B cell (primary cell): ENCODE measurements at regions of chr1 and their contacts with region 1.

Region 1: DNA sequence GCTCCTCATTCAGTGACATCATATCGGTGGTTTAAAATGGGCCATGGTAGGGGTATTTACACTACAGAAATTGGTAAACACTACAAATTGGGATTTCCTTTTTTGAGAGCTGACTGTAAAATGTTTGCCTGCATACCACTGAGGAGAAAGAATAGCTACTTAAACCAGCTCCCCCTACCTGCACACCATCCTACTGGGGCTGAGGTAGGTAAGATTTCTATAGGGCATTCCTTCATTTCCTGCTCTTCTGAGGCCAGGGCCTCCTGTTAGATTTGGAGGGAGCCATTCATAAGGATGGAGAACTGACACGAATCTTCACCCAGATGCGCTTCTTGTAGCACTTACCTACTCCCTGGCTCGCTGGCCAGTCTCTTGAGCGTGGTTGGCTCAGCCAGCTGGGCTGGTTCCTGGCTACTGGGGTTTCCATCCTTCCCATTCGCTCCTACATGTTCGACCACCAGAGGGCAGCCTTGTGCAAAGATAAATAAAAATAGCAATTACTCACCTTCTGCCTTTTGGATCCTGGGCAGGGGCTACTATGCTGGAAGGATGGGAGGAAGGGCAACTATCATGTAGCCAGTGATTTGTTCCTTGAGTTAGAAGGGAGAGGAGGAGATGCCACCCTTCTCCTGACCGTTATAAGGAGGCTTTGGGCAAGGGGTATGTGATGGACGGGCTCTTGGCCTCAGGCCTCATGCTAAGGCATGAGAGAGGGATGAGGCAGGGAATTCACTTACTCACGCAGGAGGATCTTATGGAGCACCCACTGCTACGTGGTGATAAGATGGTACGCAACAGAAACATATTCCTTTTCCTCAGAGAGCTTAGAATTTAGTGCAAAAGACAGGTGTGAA is 10.7 kb downstream of the OPTC start:
- DNase-seq: peak; percentile 80
- ATAC-seq: peak; percentile 72
- H3K4me3 ChIP-seq: no peak overlapping the region
- H3K4me3 Mint-ChIP-seq: no peak overlapping the region
- H3K27ac ChIP-seq: no peak overlapping the region
- H3K27ac Mint-ChIP-seq: no peak overlapping the region
- H3K4me1 ChIP-seq: no peaks in the 10 kb centered on the region
- H3K4me1 Mint-ChIP-seq: peaks cover 2% of the 10 kb centered on the region
- H3K27me3 ChIP-seq: peaks cover 0 to 7% (median 0%) of the 10 kb centered on the region in 4 experiments
- H3K27me3 Mint-ChIP-seq: peaks cover 16% of the 10 kb centered on the region
- CTCF ChIP-seq: peak; percentile 93

Region 2: DNA sequence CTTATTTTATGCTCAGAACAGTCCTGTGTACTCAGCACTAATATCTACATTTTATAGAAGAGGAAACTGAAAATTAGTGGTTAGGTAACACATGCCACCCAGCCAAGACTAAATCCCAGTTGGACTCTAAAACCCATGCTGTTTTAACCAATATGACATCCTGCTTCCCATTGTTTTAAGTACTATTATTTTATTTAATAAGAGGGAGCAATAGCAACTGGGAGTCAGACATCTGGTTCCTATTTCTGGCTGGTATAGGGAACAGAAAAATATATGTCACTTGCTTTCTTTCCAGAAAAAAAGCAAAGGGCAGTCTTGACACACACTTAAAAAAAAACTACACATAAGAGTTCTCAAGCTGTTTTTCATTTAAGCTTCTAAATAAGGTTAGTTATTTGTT is 589.5 kb before region 1 on chr1:
- CTCF ChIA-PET with region 1: no interaction called
- POLR2A ChIA-PET with region 1: no interaction called
- intact Hi-C with region 1: no loop called
- DNase-seq: no peak
- ATAC-seq: no peak
- H3K4me3 ChIP-seq: no peak overlapping the region
- H3K4me3 Mint-ChIP-seq: no peak overlapping the region
- H3K27ac ChIP-seq: no peak overlapping the region
- H3K27ac Mint-ChIP-seq: no peak overlapping the region
- H3K4me1 ChIP-seq: no peaks in the 10 kb centered on the region
- H3K4me1 Mint-ChIP-seq: no peaks in the 10 kb centered on the region
- H3K27me3 ChIP-seq: no peaks in the 10 kb centered on the region
- H3K27me3 Mint-ChIP-seq: no peaks in the 10 kb centered on the region
- CTCF ChIP-seq: no peak

Region 3: GRCh38 chr1:203448521-203449061 is 56.0 kb before region 1 on chr1:
- CTCF ChIA-PET with region 1: no interaction called
- POLR2A ChIA-PET with region 1: no interaction called
- intact Hi-C with region 1: no loop called
- DNase-seq: no peak
- ATAC-seq: no peak
- H3K4me3 ChIP-seq: no peak overlapping the region
- H3K4me3 Mint-ChIP-seq: no peak overlapping the region
- H3K27ac ChIP-seq: no peak overlapping the region
- H3K27ac Mint-ChIP-seq: no peak overlapping the region
- H3K4me1 ChIP-seq: peaks cover 2 to 6% of the 10 kb centered on the region in 2 donors
- H3K4me1 Mint-ChIP-seq: peaks cover 8% of the 10 kb centered on the region
- H3K27me3 ChIP-seq: peaks cover 0 to 8% (median 0%) of the 10 kb centered on the region in 4 experiments
- H3K27me3 Mint-ChIP-seq: peaks cover 8% of the 10 kb centered on the region
- CTCF ChIP-seq: no peak

Region 4: GRCh38 chr1:203492748-203493130 is 11.9 kb before region 1 on chr1:
- CTCF ChIA-PET with region 1: interaction called, 20 read pairs
- POLR2A ChIA-PET with region 1: no interaction called
- intact Hi-C with region 1: no loop called
- DNase-seq: no peak
- ATAC-seq: no peak
- H3K4me3 ChIP-seq: no peak overlapping the region
- H3K4me3 Mint-ChIP-seq: no peak overlapping the region
- H3K27ac ChIP-seq: no peak overlapping the region
- H3K27ac Mint-ChIP-seq: no peak overlapping the region
- H3K4me1 ChIP-seq: peaks cover 0 to 5% of the 10 kb centered on the region in 2 donors
- H3K4me1 Mint-ChIP-seq: peaks cover 7% of the 10 kb centered on the region
- H3K27me3 ChIP-seq: peaks cover 0 to 9% (median 0%) of the 10 kb centered on the region in 4 experiments
- H3K27me3 Mint-ChIP-seq: peaks cover 21% of the 10 kb centered on the region
- CTCF ChIP-seq: no peak

Region 5: DNA sequence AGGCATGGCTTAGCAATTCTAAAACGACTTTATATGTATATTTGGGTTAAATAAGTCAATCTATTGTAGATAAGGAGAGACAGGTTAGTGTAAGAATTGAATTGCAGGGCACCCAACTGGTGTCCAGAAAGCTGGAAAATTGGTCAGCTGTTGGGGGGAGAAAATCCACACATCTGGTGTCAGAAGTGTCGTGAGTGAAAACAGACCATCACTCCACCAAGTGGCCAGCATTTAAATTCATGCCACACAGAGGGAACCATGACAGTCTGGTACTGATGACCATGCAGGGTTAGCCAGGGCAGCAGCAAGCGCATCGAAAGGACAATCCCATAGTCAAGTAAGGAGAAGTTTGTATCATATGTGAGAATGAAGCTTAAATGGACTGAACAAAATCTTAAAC is 272.0 kb after region 1 on chr1:
- CTCF ChIA-PET with region 1: interaction called, 19 read pairs
- POLR2A ChIA-PET with region 1: no interaction called
- intact Hi-C with region 1: loop called (anchors 2 kb)
- DNase-seq: no peak
- ATAC-seq: peak; percentile 36
- H3K4me3 ChIP-seq: no peak overlapping the region
- H3K4me3 Mint-ChIP-seq: no peak overlapping the region
- H3K27ac ChIP-seq: peak overlapping the region in 1 of 2 donors; percentile 57
- H3K27ac Mint-ChIP-seq: no peak overlapping the region
- H3K4me1 ChIP-seq: peaks cover 0 to 6% of the 10 kb centered on the region in 2 donors
- H3K4me1 Mint-ChIP-seq: peaks cover 15% of the 10 kb centered on the region
- H3K27me3 ChIP-seq: peaks cover 0 to 2% (median 0%) of the 10 kb centered on the region in 4 experiments
- H3K27me3 Mint-ChIP-seq: no peaks in the 10 kb centered on the region
- CTCF ChIP-seq: no peak